HepG2 (cell line): ENCODE measurements at regions of chr4 and their contacts with region 1.

Region 1: DNA sequence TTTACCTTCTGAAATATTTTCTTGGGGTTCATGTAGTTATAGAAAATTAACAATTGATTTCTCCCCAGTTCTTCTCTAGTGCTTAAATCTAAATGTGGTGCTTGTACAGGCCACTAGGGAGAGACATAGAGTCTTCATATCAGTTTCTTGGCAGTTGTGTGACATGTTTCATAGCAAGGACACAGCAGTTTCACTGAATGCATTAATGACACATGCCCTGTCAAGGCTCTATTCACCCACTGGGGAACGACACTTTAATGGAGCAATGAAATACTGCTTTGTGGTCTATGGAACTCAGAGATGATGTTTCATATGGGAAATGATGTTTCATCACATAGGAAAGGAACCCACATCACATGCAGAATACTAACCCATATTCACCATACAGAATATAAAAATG is 2.8 kb downstream of the VEGFC start:
- DNase-seq: peak; percentile 31
- ATAC-seq: peak; percentile 41
- H3K4me3 ChIP-seq: no peak overlapping the region
- H3K27ac ChIP-seq: no peak overlapping the region
- H3K4me1 ChIP-seq: peaks cover 6% of the 10 kb centered on the region; the same call in 1 of the 2 replicates
- H3K27me3 ChIP-seq: peaks cover 3 to 20% of the 10 kb centered on the region in 2 experiments
- CTCF ChIP-seq: peak; percentile 51
- EP300 ChIP-seq: no peak
- POLR2A ChIP-seq: no peak
- RAD21 ChIP-seq: no peak

Region 2: GRCh38 chr4:176377780-176378179 is 412.2 kb before region 1 on chr4:
- CTCF ChIA-PET with region 1: no interaction called
- POLR2A ChIA-PET with region 1: no interaction called
- in situ Hi-C with region 1: no loop called
- intact Hi-C with region 1: loop called (anchors 5 kb)
- DNase-seq: no peak
- ATAC-seq: peak; percentile 45; the same call in 2 of the 3 replicates
- H3K4me3 ChIP-seq: no peak overlapping the region
- H3K27ac ChIP-seq: no peak overlapping the region
- H3K4me1 ChIP-seq: 0 out of 2 replicates have a peak, but pooled peaks cover 4% of the 10 kb centered on the region
- H3K27me3 ChIP-seq: no peaks in the 10 kb centered on the region; a peak in 1 of 5 replicates
- CTCF ChIP-seq: peak; percentile 50
- EP300 ChIP-seq: no peak
- POLR2A ChIP-seq: no peak
- RAD21 ChIP-seq: no peak

Region 3: DNA sequence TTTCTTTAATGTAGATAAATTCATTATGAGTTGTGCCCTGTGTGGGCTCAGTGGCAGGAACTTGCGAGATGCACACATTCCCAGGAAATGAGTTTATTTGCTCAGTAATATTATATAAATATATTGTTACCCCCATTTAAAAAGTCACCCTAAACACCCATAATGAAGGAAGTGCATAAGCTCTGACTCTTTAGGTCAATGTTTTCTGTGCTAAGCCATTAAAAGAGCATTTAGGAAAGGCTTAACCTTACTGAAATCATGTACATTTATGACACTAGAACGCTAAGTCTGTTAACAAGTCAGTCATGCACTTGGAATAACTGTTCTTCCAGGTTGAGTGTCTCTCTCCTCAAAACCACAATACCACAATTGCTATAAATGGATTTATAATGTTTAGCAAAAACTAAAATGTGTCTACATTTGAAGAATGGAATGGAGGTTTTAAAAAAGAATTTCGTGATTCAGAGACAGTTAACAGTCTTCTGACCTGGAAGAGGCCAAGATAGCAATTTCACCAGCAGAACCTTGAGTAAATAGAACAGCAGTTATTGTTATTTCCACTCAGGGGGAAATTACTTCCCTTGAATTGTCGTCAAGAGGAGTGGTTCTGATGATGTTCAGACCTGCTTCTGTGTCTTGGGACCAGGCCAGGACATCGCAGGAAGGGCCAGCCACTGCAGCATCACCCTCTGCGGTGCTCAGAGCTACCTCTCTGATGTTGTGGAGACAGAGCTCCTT is 93.9 kb after region 1 on chr4:
- CTCF ChIA-PET with region 1: no interaction called
- POLR2A ChIA-PET with region 1: no interaction called
- in situ Hi-C with region 1: no loop called
- intact Hi-C with region 1: no loop called
- DNase-seq: no peak
- ATAC-seq: no peak
- H3K4me3 ChIP-seq: no peak overlapping the region
- H3K27ac ChIP-seq: no peak overlapping the region
- H3K4me1 ChIP-seq: no peaks in the 10 kb centered on the region
- H3K27me3 ChIP-seq: no peaks in the 10 kb centered on the region
- CTCF ChIP-seq: no peak
- EP300 ChIP-seq: no peak
- POLR2A ChIP-seq: no peak
- RAD21 ChIP-seq: no peak